Endothelial cell of umbilical vein (primary cell): ENCODE measurements at regions of chr15 and their contacts with region 1.

Region 1: DNA sequence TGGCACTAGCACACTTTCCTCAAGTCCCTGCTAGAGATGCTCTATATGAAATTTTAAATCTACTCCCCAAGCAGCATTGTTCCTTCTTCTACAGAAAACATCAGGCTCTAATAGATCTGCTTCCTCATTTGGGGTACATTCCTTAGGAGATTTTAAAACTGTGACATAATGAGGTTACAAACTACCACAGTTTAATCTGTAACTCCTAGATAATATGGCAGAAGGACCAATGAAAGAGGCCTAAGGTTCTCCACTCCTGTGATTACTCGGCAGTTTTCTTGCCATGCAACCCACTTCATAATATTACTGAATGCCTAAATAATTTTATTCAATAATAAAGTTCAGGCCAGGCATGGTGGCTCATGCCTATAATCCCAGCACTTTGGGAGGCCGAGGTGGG is 16.1 kb downstream of the ZNF106 start:
- DNase-seq: no peak
- H3K4me3 ChIP-seq: no peak overlapping the region
- H3K27ac ChIP-seq: no peak overlapping the region
- H3K4me1 ChIP-seq: no peaks in the 10 kb centered on the region
- H3K27me3 ChIP-seq: no peaks in the 10 kb centered on the region
- CTCF ChIP-seq: no peak
- POLR2A ChIP-seq: no peak

Region 2: GRCh38 chr15:42065033-42065432 is 409.8 kb before region 1 on chr15:
- CTCF ChIA-PET with region 1: no interaction called
- POLR2A ChIA-PET with region 1: no interaction called
- dilution Hi-C with region 1: no loop called
- intact Hi-C with region 1: loop called (anchors 5 kb)
- DNase-seq: peak; percentile 34
- H3K4me3 ChIP-seq: no peak overlapping the region
- H3K27ac ChIP-seq: no peak overlapping the region
- H3K4me1 ChIP-seq: no peaks in the 10 kb centered on the region
- H3K27me3 ChIP-seq: no peaks in the 10 kb centered on the region
- CTCF ChIP-seq: no peak
- POLR2A ChIP-seq: no peak

Region 3: DNA sequence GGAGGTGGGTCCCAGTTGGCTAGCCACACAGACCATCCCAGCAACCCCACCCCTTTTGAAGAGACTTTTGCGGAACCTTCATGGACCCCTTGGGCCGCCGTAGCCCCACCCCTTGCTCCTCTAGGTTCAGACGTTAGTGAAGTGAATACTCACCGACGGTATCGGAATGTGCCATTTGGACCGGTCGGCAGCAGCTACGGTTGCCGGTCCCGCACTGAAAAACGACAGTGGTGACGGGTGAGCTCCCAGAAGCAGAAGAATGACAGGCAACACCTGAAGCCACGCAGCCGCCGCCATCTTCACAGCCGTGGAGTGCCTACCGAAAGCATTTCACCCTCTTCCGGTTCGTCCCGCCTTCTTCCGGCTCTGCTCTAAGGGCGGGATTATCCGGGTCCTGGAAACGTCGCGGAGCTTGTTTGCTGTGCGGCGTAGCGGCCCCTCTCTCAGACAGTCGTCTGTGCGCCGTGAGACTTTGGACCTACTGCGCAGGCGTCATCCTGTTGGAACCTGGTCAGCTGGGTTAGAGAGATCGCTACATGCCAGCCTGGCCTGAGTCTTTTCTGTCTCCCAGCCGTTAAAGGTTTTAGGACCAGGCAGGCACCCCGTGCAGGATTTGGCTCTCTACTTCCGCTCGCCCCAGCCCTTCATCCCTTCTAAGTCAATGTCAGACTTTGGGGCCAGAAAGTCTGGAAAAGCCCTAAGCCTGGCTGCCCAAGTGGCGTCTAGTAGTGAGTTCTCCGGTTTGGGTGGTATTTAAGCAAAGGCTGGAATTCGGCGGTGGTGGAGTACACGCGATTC is 201.5 kb before region 1 on chr15 and contains the starts of genes GANC and TMEM87A:
- CTCF ChIA-PET with region 1: no interaction called
- POLR2A ChIA-PET with region 1: no interaction called
- dilution Hi-C with region 1: no loop called
- intact Hi-C with region 1: loop called (anchors 5 kb)
- DNase-seq: peak; percentile 99
- H3K4me3 ChIP-seq: peak within 1 kb of the TSS; percentile 84 to 97 (median 96)
- H3K27ac ChIP-seq: peak within 1 kb of the TSS; percentile 89
- H3K4me1 ChIP-seq: peaks cover 41% of the 10 kb centered on the region
- H3K27me3 ChIP-seq: no peaks in the 10 kb centered on the region
- CTCF ChIP-seq: no peak
- POLR2A ChIP-seq: peak; percentile 94
- total RNA-seq, gene GANC: 17.8 and 20.0 TPM in 2 replicates
- total RNA-seq, gene TMEM87A: 41.1 and 45.5 TPM in 2 replicates

Region 4: GRCh38 chr15:42457445-42458442 is 17.1 kb before region 1 on chr15:
- CTCF ChIA-PET with region 1: interaction called, 11 read pairs
- POLR2A ChIA-PET with region 1: no interaction called
- dilution Hi-C with region 1: no loop called
- intact Hi-C with region 1: no loop called
- DNase-seq: peak; percentile 83
- H3K4me3 ChIP-seq: no peak overlapping the region
- H3K27ac ChIP-seq: peak overlapping the region; percentile 57
- H3K4me1 ChIP-seq: peaks cover 19% of the 10 kb centered on the region
- H3K27me3 ChIP-seq: no peaks in the 10 kb centered on the region
- CTCF ChIP-seq: no peak
- POLR2A ChIP-seq: no peak

Region 5: GRCh38 chr15:42591238-42591934 is 116.6 kb after region 1 on chr15:
- CTCF ChIA-PET with region 1: no interaction called
- POLR2A ChIA-PET with region 1: no interaction called
- dilution Hi-C with region 1: no loop called
- intact Hi-C with region 1: no loop called
- DNase-seq: peak; percentile 47
- H3K4me3 ChIP-seq: no peak overlapping the region
- H3K27ac ChIP-seq: no peak overlapping the region
- H3K4me1 ChIP-seq: peaks cover 2% of the 10 kb centered on the region
- H3K27me3 ChIP-seq: no peaks in the 10 kb centered on the region
- CTCF ChIP-seq: peak in 1 of 2 donors; percentile 40
- POLR2A ChIP-seq: no peak